ENCODE measurements at regions of chr1 and their contacts with region 1.

Region 1: DNA sequence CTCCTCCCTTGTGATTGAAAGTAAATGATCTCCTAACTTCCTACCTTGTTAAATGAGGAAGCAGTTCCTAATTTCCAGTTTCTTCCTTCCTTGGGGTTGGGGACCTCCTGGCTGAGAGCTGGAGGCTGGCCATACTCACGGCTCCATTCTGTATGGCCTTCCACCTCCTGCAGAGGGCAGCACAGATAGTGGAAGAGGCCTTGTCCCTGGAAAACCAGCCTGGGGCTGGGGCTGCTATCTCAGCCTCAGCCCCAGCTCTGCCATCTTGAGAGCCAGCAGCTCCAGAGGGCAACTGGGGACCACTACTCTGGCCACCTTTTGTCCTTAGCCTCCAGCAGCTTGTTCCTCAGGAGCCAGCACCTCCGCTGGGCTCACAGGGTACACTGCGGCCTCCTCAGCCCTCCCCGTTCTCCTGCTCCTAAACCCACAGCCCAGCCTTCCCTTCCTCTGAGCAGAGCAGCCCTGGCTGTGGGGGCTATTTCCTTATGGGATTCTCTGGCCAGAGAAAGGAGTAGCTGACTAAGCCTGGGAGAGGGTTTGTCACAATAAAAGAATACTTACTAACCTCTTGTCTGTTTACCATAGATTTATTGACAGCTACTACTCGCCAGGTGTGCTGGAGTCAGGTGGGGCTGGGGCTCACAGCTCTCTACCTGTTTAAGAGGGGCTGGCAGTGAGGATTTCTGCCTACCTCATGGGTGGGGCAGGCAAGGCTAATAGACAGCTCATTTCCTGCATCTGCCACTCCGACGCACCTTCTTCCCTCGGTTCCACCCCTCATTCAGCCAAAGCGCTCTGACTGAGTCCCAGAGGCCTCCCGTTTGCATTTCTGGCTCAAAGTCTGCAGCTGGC is 6.3 kb downstream of the TMEM234 start:
- DNase-seq: peak; percentile 79
- H3K4me3 Mint-ChIP-seq: no peak overlapping the region
- H3K27ac Mint-ChIP-seq: peak overlapping the region; percentile 74
- H3K4me1 Mint-ChIP-seq: peaks cover 36% of the 10 kb centered on the region
- H3K27me3 Mint-ChIP-seq: no peaks in the 10 kb centered on the region

Region 2: DNA sequence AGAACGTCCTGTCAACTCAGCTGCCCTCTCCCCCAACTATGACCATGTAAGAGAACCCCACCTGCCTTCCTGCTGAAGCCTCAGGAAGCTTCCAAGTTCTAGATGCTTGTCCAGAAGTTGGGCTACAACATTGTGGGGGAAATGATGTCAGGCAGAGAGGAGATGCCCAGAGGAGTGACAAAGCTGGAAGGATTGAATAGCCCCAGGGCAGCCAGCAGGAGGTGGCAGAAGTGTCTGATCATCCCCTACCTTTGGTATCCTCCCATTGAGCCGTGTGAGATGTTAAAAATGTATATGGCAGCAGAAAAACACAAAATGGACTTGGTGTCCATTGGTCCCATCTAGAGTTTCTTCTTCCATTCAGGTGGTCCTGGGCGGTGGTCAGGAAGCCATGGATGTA is 12.9 kb after region 1 on chr1:
- CTCF ChIA-PET with region 1: interaction called, 20 read pairs
- DNase-seq: no peak
- H3K4me3 Mint-ChIP-seq: no peak overlapping the region
- H3K27ac Mint-ChIP-seq: no peak overlapping the region
- H3K4me1 Mint-ChIP-seq: peaks cover 20% of the 10 kb centered on the region
- H3K27me3 Mint-ChIP-seq: no peaks in the 10 kb centered on the region

Region 3: DNA sequence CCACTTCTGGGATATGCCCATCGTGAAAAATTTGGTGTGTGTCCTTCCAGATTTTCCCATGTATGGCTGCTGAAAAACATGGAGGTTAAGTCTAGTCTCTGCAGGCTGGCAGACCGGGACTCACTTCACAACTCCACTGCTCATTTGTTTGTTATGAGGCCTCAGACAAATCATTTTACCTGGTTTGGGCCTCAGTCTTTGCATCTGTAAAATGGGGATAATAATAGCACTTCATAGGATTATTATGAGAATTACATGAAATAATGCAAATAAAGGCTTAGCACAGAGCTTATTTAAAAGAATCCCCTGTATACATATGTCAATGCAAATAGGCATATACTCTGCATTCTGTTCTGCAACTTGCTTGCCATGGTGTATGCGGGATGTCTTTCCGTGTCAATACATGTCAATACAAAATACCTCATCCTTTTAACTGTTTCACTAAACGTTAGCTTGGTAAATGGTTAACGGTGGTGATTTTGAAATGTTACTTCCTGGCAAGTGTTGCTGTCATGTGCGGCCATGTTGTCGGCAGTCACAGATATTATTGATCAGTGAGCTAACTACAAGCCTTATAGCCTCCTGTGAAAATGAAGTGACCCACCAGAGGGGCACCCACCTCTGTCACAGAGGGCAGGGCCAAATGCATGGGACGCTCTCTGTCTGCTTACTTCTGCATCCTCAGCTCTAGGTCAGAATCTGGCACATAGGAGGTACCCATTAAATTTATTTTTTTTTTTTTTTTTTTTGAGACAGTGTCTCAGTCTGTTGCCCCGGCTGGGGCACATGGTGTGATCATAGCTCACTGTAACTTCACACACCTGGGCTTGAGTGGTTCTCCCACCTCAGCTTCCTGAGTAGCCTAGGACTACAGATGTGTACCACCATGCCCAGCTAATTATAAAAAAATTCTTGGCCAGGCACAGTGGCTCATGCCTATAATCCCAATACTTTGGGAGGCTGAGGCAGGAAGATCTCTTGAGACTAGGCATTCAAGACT is 39.5 kb after region 1 on chr1:
- CTCF ChIA-PET with region 1: interaction called, 61 read pairs
- DNase-seq: peak; percentile 49
- H3K4me3 Mint-ChIP-seq: peak overlapping the region; percentile 99
- H3K27ac Mint-ChIP-seq: peak overlapping the region; percentile 93
- H3K4me1 Mint-ChIP-seq: peaks cover 44% of the 10 kb centered on the region
- H3K27me3 Mint-ChIP-seq: no peaks in the 10 kb centered on the region

Region 4: GRCh38 chr1:32357614-32358013 is 141.8 kb after region 1 on chr1:
- CTCF ChIA-PET with region 1: interaction called, 12 read pairs
- DNase-seq: no peak
- H3K4me3 Mint-ChIP-seq: no peak overlapping the region
- H3K27ac Mint-ChIP-seq: no peak overlapping the region
- H3K4me1 Mint-ChIP-seq: peaks cover 38% of the 10 kb centered on the region
- H3K27me3 Mint-ChIP-seq: peaks cover 49% of the 10 kb centered on the region

Region 5: GRCh38 chr1:32400876-32401631 is 185.2 kb after region 1 on chr1:
- CTCF ChIA-PET with region 1: interaction called, 27 read pairs
- DNase-seq: peak; percentile 69
- H3K4me3 Mint-ChIP-seq: no peak overlapping the region
- H3K27ac Mint-ChIP-seq: no peak overlapping the region
- H3K4me1 Mint-ChIP-seq: no peaks in the 10 kb centered on the region
- H3K27me3 Mint-ChIP-seq: peaks cover 17% of the 10 kb centered on the region

Region 6: GRCh38 chr1:32741413-32742198 is 525.8 kb after region 1 on chr1:
- CTCF ChIA-PET with region 1: no interaction called
- DNase-seq: no peak
- H3K4me3 Mint-ChIP-seq: peak overlapping the region; percentile 66
- H3K27ac Mint-ChIP-seq: no peak overlapping the region
- H3K4me1 Mint-ChIP-seq: peaks cover 7% of the 10 kb centered on the region
- H3K27me3 Mint-ChIP-seq: peaks cover 75% of the 10 kb centered on the region